Motor neuron (in vitro differentiated cells): ENCODE measurements at regions of chr18 and their contacts with region 1.

Region 1: GRCh38 chr18:63578357-63578958 is 8.7 kb upstream of the SERPINB13 start:
- ATAC-seq: peak in 4 of 8 experiments; percentile 44 to 77 (median 51)
- H3K4me3 ChIP-seq: no peak overlapping the region
- H3K27ac ChIP-seq: no peak overlapping the region
- H3K4me1 ChIP-seq: no peaks in the 10 kb centered on the region

Region 2: DNA sequence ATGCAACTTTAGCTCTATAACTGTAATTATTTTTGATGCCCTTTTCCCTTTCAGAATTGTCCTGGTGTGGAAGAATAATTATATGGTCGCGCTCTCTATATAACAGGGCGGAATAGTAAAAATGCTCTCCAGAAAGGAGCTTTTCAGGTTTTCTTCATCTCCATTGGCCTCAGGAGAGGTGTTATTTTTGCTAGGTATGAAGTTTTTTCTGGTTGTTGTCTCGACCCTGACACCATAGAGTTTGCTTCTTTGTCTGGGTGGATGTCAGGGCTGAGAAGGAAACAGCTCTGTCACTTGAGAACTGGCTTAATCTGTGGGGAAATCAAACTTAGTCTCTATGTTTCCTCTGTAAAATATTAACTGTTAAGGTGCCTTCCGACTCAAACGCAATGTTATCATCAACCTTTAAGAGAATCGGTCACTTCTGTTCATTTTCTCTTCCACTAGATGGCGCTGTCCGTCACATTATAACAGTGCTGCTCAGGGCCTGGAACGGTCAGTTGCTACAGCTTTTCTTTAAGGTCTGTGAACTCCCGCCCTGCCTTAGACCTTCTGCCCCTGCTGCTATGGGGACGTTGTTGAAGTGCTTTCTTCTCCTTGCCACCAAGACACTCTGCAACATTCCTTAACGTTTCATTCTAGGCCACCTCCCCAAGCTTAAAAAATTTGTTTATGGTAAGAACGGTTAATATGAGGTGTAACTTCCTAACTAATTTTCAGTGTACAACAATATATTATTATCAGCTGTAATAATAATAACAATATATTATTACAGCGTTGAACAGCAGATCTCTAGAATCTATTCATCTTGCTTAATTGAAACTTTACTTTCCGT is 60.1 kb before region 1 on chr18:
- in situ Hi-C with region 1: loop called in 1 of 9 experiments (anchors 5 kb)
- ATAC-seq: peak; percentile 83 to 98 (median 90)
- H3K4me3 ChIP-seq: no peak overlapping the region
- H3K27ac ChIP-seq: no peak overlapping the region
- H3K4me1 ChIP-seq: no peaks in the 10 kb centered on the region

Region 3: DNA sequence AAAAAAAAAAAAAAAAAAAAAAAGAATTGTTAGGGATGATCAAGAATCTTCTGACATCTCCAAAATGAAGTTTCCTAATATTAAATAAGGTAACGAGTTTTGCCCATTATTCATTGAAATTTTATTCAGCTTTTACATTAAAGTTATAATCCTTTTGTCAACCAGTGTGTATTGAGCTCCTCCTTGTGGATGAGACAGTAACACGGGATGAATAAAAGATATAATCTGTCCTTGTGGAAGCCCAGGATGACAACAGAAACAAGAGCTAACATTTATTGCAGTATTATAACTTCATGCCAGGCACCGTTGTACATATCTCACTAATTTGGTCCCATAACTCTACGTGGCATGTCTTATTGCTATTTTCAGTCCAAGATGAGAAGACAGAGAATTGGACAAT is 163.3 kb after region 1 on chr18:
- in situ Hi-C with region 1: loop called in 1 of 9 experiments (anchors 25 kb)
- ATAC-seq: peak in 2 of 8 experiments; percentile 57 to 63
- H3K4me3 ChIP-seq: no peak overlapping the region
- H3K27ac ChIP-seq: no peak overlapping the region
- H3K4me1 ChIP-seq: no peaks in the 10 kb centered on the region